HepG2 (cell line): ENCODE measurements at regions of chr21 and their contacts with region 1.

Region 1: GRCh38 chr21:44949779-44950198 is 10.0 kb downstream of the SLX9 start:
- DNase-seq: peak; percentile 57
- ATAC-seq: peak; percentile 91
- H3K4me3 ChIP-seq: no peak overlapping the region
- H3K27ac ChIP-seq: no peak overlapping the region
- H3K4me1 ChIP-seq: peaks cover 8% of the 10 kb centered on the region; the same call in 1 of the 2 replicates
- H3K27me3 ChIP-seq: no peaks in the 10 kb centered on the region
- CTCF ChIP-seq: peak; percentile 98
- EP300 ChIP-seq: no peak
- POLR2A ChIP-seq: no peak
- RAD21 ChIP-seq: peak; percentile 89

Region 2: GRCh38 chr21:44670642-44671432 is 279.0 kb before region 1 on chr21:
- CTCF ChIA-PET with region 1: no interaction called
- POLR2A ChIA-PET with region 1: no interaction called
- in situ Hi-C with region 1: no loop called
- intact Hi-C with region 1: no loop called
- DNase-seq: no peak
- ATAC-seq: no peak
- H3K4me3 ChIP-seq: no peak overlapping the region
- H3K27ac ChIP-seq: no peak overlapping the region
- H3K4me1 ChIP-seq: no peaks in the 10 kb centered on the region
- H3K27me3 ChIP-seq: peaks cover 0 to 3% of the 10 kb centered on the region in 2 experiments; a peak in 1 of 5 replicates
- CTCF ChIP-seq: no peak
- EP300 ChIP-seq: no peak
- POLR2A ChIP-seq: no peak
- RAD21 ChIP-seq: no peak

Region 3: DNA sequence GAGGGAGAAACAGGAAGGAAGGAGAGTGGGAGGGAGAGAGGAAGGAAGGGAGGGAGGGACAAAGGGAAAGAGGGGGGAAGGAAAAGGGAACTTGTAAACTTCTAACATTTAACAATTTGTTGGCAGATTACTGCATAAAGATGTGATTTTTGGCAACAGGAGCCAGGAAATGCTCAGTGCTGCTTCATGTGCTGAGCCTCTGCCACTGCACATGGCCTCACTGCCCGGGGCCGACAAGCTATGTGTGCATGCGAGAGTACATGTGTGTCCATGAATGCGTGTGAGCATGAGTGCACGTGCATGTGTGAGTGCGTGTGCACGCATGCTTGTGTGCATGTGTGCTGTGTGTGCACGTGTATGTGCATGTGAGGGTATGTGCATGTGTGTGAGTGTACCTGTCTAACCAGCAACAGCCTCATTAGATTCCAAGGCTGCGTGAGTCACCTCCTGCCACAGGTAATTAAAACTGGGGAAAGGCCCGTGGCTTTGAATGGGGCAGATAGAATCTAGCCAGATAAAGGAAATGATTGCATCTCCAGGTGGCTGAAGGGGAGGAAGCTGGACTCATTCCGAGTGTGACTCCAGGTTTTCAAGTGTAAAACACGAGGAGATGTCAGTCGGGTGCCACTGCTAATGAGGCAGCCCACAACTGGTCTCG is 197.0 kb before region 1 on chr21:
- CTCF ChIA-PET with region 1: no interaction called
- POLR2A ChIA-PET with region 1: no interaction called
- in situ Hi-C with region 1: no loop called
- intact Hi-C with region 1: no loop called
- DNase-seq: no peak
- ATAC-seq: 0 out of 3 replicates have a peak, but pooled peaks have one; percentile 15
- H3K4me3 ChIP-seq: no peak overlapping the region
- H3K27ac ChIP-seq: no peak overlapping the region
- H3K4me1 ChIP-seq: no peaks in the 10 kb centered on the region
- H3K27me3 ChIP-seq: peaks cover 11 to 53% of the 10 kb centered on the region in 2 experiments
- CTCF ChIP-seq: no peak
- EP300 ChIP-seq: no peak
- POLR2A ChIP-seq: no peak
- RAD21 ChIP-seq: no peak

Region 4: DNA sequence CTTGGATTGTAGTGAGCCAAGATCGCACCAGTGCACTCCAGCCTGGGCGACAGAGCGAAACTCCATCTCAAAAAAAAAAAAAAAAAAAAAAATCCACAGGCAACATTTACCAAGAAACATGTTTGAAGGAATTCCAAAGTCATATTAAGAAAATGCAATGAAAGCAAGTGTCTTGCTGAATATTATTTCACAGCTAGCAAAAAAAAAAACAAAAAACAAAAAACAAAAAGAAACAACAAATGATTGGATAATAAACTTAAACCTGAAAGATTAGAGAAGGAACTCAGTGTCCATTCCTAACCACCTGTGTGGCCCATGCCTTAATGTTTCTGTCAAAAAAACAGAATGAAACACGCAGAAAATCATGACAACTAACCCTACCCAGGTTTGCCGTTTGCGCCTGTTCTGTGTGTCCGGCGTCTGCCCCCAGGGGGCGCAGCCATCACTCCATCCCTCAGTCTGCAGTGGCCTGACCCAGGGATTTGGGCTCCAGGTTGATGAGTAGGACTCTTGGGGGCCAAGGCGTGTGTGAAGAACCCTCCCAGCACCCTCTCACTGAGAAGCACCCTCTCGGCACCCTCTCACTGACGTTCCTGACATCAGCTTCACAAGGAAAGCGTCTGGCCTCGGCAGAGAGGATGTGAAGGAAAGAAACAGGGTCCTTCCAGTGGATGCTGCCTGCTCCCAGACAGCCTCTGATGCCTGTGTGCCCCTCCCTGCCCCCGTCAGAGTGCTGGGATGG is 57.1 kb before region 1 on chr21:
- CTCF ChIA-PET with region 1: no interaction called
- POLR2A ChIA-PET with region 1: no interaction called
- in situ Hi-C with region 1: no loop called
- intact Hi-C with region 1: no loop called
- DNase-seq: no peak
- ATAC-seq: peak; percentile 67
- H3K4me3 ChIP-seq: no peak overlapping the region
- H3K27ac ChIP-seq: no peak overlapping the region
- H3K4me1 ChIP-seq: peaks cover 74% of the 10 kb centered on the region
- H3K27me3 ChIP-seq: peaks cover 3 to 7% of the 10 kb centered on the region in 2 experiments; a peak in 2 of 5 replicates
- CTCF ChIP-seq: peak; percentile 90
- EP300 ChIP-seq: no peak
- POLR2A ChIP-seq: no peak
- RAD21 ChIP-seq: peak; percentile 73

Region 5: DNA sequence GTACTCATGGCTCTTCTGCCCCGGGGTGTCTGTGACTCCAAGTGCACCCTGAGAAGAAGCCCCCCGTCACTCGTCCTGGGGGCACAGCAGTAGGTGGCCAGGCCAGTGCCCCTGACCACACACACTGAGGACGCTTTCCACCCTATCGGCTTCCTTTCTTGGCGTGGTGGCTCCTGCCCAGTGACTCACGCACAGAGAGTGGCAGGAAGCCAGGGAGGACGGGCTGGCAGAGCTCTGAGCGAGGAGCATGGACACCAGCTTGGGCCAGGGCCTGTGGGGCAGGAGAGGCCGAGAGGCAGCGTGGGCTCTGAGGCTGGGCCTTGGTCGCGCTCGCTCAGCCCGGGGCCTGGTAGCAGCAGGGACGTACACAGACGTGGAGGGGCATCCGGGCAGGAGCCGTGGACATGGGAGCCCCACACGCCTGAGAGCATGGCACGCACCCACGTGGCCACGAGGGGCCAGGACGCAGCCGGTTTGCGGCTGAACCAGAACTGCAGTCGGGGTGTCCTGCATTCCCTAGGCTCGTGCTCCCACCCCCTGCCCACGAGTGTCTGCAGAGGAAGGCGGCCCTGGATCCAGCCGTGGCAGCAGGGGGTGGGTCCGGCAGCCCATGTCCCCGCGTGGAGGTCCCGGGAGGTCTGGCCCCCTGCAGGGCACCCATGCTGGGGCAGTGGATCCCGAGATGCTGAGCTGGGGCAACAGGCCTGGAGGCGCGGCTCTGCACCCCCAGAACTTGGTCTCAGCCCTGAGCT is 51.4 kb after region 1 on chr21:
- CTCF ChIA-PET with region 1: no interaction called
- POLR2A ChIA-PET with region 1: no interaction called
- in situ Hi-C with region 1: no loop called
- intact Hi-C with region 1: no loop called
- DNase-seq: no peak
- ATAC-seq: no peak
- H3K4me3 ChIP-seq: no peak overlapping the region
- H3K27ac ChIP-seq: no peak overlapping the region
- H3K4me1 ChIP-seq: peaks cover 51% of the 10 kb centered on the region
- H3K27me3 ChIP-seq: peaks cover 7 to 42% of the 10 kb centered on the region in 2 experiments
- CTCF ChIP-seq: no peak
- EP300 ChIP-seq: no peak
- POLR2A ChIP-seq: no peak
- RAD21 ChIP-seq: no peak

Region 6: DNA sequence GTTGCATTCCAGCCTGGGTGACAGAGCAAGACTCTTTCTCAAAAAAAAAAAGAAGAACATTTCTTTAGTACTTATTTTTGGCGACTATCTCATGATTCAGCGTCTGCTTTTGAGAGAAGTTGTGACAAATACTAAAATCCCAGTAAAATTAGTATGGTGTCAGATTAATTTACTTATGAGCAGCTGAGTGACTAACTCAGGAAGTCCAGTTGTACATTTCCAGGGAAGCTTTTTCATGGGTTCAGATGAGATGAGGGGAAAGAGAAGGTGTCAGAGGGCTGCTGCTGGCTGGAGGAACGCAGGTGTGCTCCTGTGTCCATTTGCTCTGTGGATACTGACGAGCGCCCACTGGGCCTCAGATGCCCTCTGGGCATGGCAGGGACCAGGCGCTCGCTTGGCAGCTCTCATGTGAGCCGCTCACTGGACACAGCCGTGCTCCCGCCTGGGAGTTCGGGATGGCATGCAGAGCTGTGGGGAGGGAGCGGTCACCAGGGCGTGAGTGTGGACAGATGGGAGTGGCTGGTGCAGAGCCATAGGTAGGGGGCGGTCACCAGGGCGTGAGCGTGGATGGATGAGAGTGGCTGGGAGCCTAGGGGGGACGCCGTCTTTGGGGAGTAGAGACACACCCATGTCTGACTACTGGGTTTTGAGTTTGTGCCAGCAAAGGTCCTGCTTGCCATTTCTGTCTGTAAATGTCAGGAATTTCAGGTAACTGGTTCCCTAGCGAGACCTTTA is 179.6 kb after region 1 on chr21:
- CTCF ChIA-PET with region 1: interaction called, 29 read pairs
- POLR2A ChIA-PET with region 1: no interaction called
- in situ Hi-C with region 1: no loop called
- intact Hi-C with region 1: loop called (anchors 1 kb)
- DNase-seq: no peak
- ATAC-seq: no peak
- H3K4me3 ChIP-seq: no peak overlapping the region
- H3K27ac ChIP-seq: no peak overlapping the region
- H3K4me1 ChIP-seq: no peaks in the 10 kb centered on the region
- H3K27me3 ChIP-seq: no peaks in the 10 kb centered on the region
- CTCF ChIP-seq: no peak
- EP300 ChIP-seq: no peak
- POLR2A ChIP-seq: no peak
- RAD21 ChIP-seq: no peak

Region 7: GRCh38 chr21:45140346-45140940 is 190.7 kb after region 1 on chr21:
- CTCF ChIA-PET with region 1: interaction called, 11 read pairs
- POLR2A ChIA-PET with region 1: interaction called, 3 read pairs
- in situ Hi-C with region 1: loop called (anchors 5 kb)
- intact Hi-C with region 1: no loop called
- DNase-seq: peak; percentile 86
- ATAC-seq: peak; percentile 96
- H3K4me3 ChIP-seq: no peak overlapping the region
- H3K27ac ChIP-seq: no peak overlapping the region
- H3K4me1 ChIP-seq: peaks cover 12% of the 10 kb centered on the region
- H3K27me3 ChIP-seq: no peaks in the 10 kb centered on the region
- CTCF ChIP-seq: peak; percentile 94
- EP300 ChIP-seq: no peak
- POLR2A ChIP-seq: no peak
- RAD21 ChIP-seq: peak; percentile 91